HEK293 (cell line): ENCODE measurements at regions of chr11 and their contacts with region 1.

Region 1: GRCh38 chr11:78715639-78716311 is 141.1 kb upstream of the NARS2 start:
- H3K4me3 ChIP-seq: no peak overlapping the region
- H3K27ac ChIP-seq: no peak overlapping the region
- H3K4me1 ChIP-seq: no peaks in the 10 kb centered on the region
- CTCF ChIP-seq: peak; percentile 69

Region 2: GRCh38 chr11:78698612-78699011 is 17.2 kb before region 1 on chr11:
- CTCF ChIA-PET with region 1: interaction called, 26 read pairs
- POLR2A ChIA-PET with region 1: no interaction called
- H3K4me3 ChIP-seq: no peak overlapping the region
- H3K27ac ChIP-seq: no peak overlapping the region
- H3K4me1 ChIP-seq: no peaks in the 10 kb centered on the region
- CTCF ChIP-seq: no peak

Region 3: DNA sequence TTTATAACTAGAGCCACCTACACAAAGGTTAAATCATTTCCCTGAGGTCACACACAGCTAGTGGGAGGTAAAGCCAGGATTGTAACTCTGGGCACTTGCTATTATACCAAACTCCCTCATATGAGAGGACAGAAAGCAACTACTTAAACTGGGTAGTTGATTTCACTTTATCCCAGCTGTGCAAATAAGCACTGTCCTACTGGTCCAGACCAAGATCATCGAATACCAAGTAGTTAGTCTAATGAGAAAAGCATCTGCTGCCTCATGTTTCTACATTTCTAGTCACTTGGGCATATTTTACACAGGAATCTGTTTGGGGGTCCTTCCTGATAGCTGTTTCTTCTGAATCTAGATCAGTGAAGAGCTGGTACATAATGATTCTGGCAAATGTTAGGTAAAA is 37.5 kb after region 1 on chr11:
- CTCF ChIA-PET with region 1: interaction called, 12 read pairs
- POLR2A ChIA-PET with region 1: no interaction called
- H3K4me3 ChIP-seq: no peak overlapping the region
- H3K27ac ChIP-seq: no peak overlapping the region
- H3K4me1 ChIP-seq: no peaks in the 10 kb centered on the region
- CTCF ChIP-seq: no peak